Activated CD4-positive, alpha-beta T cell treated with anti-CD3 and anti-CD28 coated beads, Interleukin-2, amount 10 ng/mL, durations not matched to agents 24 days and 14 days (primary cell): ENCODE measurements at regions of chr19 and their contacts with region 1.

Region 1: DNA sequence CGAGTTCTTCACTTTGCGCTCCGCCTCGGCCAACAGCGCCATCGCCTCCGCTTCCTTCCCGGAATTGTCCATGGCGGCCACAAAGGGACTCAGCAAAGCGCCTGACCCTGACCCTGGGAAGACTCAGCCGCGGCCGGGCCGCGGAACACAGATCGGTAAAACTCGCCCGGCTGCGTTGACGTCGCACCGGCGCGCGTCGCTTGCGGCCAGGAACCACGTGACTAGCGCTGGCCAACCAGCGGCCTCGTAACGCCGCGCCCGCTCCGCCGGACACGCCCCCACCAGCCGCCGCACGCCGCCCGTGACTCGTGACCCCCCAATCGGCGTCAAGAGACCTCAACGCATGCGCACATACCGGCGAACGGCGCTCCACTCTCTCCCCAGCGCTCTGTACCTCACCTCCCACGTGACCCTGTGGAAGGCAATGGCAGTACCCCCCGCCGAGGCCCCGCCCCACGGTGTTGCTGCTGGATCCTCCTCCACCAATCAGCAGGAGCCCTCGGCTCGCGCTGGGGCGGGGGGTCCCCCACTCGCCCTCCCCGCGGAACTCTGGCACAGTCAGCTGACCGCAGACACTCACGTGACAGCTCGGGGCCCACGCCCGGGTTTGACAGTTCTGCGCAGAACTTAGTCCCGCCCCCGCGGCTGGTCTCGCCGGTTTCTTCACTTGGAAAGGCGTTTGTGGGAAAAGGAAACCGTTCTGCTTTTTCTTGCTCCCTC is at the start of gene NAPA:
- DNase-seq: peak; percentile 100
- H3K4me3 Mint-ChIP-seq: peak within 1 kb of the TSS; percentile 99
- H3K27ac Mint-ChIP-seq: peak within 1 kb of the TSS; percentile 95
- H3K4me1 Mint-ChIP-seq: peaks cover 78% of the 10 kb centered on the region
- H3K27me3 Mint-ChIP-seq: no peaks in the 10 kb centered on the region
- total RNA-seq, gene NAPA: 61.9 and 66.5 TPM in 2 replicates

Region 2: DNA sequence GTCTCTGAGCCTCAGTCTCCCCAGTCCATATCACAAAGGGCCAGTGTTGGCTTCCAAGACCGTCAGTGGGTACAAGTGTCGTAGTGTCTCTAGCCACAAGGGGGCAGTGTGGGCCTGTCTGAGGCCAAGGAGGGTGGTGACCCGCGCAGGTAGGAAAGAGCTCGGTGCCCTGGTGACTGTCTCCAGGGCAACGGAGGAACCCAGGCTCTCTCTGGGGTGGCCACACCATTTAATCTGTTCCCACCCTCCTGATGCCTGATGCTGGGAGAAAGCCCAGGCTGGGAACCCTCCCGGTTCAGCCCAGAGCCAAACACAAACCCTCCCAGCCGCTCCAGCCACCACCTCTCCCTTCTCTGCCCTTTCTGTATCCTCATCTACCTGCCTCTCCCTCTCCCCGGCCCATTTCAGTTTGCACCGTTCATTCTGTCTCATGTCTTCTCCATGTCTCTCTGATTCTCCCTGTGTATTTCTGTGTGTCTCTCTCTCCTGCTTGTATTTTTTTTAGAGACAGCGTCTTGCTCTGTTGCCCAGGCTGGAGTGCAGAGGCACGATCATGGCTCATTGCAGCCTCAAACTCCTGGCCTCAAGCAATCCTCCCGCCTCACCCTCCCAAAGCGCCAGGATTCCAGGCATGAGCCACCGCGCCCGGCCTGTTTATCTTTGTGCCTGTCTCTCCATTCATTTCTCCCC is 78.2 kb before region 1 on chr19:
- intact Hi-C with region 1: loop called (anchors 1 kb)
- DNase-seq: peak; percentile 95
- H3K4me3 Mint-ChIP-seq: peak overlapping the region; percentile 19
- H3K27ac Mint-ChIP-seq: peak overlapping the region; percentile 19
- H3K4me1 Mint-ChIP-seq: peaks cover 34% of the 10 kb centered on the region
- H3K27me3 Mint-ChIP-seq: peaks cover 24% of the 10 kb centered on the region

Region 3: DNA sequence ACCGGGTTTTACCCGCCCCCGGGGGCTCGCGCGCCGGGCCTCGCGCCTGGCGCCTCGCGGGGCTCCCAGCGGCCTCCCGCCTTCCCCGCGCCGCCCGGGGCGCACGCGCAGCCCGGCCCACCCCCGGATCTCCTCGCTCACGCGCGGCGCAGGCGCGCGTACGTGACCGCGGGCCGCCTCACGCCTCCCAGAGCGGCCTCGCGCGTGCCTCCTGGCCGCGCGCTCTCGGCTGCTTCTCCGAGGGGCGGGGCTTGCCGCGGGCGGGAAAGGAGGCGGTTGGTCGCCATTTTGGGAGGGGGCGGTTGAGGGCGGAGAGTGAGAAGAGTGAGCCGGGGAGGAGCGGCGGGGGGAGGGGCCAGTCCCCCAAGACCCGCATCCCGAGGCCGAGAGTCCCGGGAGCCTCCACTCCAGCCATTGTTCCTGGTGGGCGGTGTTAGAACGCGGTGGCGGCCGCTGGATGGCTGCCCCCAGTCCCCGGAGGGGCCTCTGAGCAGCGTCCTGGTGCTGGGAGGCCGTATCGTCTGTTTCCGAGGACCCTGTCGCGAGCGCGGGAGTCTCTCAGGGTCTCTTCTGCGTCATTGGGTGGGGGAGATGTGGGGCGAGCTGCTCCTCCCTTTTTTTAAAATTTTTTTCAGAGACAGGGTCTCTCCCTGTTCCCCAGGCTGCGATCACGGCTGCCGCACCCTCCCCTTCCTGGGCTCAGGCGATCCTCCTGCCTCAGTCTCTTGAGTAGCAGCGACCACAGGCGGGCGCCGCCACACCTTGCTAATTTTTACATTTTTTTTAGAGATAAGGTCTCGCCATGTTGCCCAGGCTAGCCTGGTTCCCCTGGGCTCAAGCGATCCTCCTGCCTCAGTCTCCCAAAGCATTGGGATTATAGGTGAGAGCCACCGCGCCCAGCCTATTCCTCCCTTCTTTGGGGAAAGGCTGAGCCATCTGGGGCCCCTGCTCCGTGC is 58.3 kb after region 1 on chr19 and contains the start of gene ZNF541:
- intact Hi-C with region 1: loop called (anchors 2 kb)
- DNase-seq: peak; percentile 93
- H3K4me3 Mint-ChIP-seq: peak within 1 kb of the TSS; percentile 51
- H3K27ac Mint-ChIP-seq: no peak within 1 kb of the TSS
- H3K4me1 Mint-ChIP-seq: peaks cover 20% of the 10 kb centered on the region
- H3K27me3 Mint-ChIP-seq: peaks cover 26% of the 10 kb centered on the region
- total RNA-seq, gene ZNF541: not detected in 2 replicates

Region 4: GRCh38 chr19:47608074-47608918 is 93.3 kb after region 1 on chr19:
- intact Hi-C with region 1: loop called (anchors 1 kb)
- DNase-seq: peak; percentile 100
- H3K4me3 Mint-ChIP-seq: peak overlapping the region; percentile 87
- H3K27ac Mint-ChIP-seq: peak overlapping the region; percentile 75
- H3K4me1 Mint-ChIP-seq: peaks cover 23% of the 10 kb centered on the region
- H3K27me3 Mint-ChIP-seq: no peaks in the 10 kb centered on the region